Left lung (tissue), 14 donors: ENCODE measurements at regions of chr5 and their contacts with region 1.

Region 1: DNA sequence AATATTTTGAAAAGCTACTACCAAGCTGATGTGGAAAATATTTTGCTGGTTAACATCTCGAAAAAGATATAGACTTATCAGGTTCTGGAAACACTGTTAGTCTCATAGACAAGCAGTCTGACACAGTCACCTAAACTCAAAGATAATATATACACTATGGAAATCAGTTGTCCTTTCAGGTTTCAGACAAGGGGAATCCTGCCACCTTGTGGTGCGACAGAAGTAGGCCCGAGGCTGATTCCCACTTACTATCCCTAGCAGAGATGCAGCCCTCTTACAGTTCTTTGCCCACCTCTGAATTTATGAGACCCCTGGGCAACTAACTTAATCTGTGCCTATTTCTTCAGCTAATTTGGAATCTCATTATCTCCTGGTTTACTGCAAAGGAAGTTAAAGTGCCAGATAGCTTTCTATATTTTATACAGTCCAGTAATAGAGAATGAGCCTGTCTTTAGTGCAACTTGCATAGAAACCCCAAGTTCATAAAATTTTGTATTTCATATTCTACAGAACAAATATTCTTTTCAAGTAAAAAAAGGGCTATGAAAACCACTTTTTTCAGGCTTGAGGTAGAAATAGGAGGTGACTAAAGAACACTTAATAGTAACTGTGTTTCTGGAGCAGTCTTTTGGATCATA is 16.9 kb downstream of the RAD1 start:
- DNase-seq: peak in 3 of 4 donors; percentile 46 to 84 (median 61)
- ATAC-seq: peak; percentile 98
- H3K4me3 ChIP-seq: no peak overlapping the region
- H3K27ac ChIP-seq: no peak overlapping the region
- H3K4me1 ChIP-seq: no peaks in the 10 kb centered on the region
- H3K27me3 ChIP-seq: no peaks in the 10 kb centered on the region
- CTCF ChIP-seq: peak; percentile 80 to 88

Region 2: GRCh38 chr5:34483442-34484033 is 414.8 kb before region 1 on chr5:
- intact Hi-C with region 1: loop called in 1 of 2 experiments (anchors 5 kb)
- DNase-seq: no peak
- ATAC-seq: no peak
- H3K4me3 ChIP-seq: no peak overlapping the region
- H3K27ac ChIP-seq: no peak overlapping the region
- H3K4me1 ChIP-seq: peaks cover 14 to 18% of the 10 kb centered on the region in 2 donors
- H3K27me3 ChIP-seq: no peaks in the 10 kb centered on the region
- CTCF ChIP-seq: no peak

Region 3: GRCh38 chr5:34522599-34523386 is 375.6 kb before region 1 on chr5:
- intact Hi-C with region 1: loop called in 1 of 2 experiments (anchors 10 kb)
- DNase-seq: peak in 3 of 4 donors; percentile 65 to 82 (median 68)
- ATAC-seq: peak; percentile 92
- H3K4me3 ChIP-seq: no peak overlapping the region
- H3K27ac ChIP-seq: peak overlapping the region in 1 of 2 donors; percentile 29
- H3K4me1 ChIP-seq: peaks cover 0 to 21% of the 10 kb centered on the region in 2 donors
- H3K27me3 ChIP-seq: no peaks in the 10 kb centered on the region
- CTCF ChIP-seq: peak; percentile 74 to 75

Region 4: DNA sequence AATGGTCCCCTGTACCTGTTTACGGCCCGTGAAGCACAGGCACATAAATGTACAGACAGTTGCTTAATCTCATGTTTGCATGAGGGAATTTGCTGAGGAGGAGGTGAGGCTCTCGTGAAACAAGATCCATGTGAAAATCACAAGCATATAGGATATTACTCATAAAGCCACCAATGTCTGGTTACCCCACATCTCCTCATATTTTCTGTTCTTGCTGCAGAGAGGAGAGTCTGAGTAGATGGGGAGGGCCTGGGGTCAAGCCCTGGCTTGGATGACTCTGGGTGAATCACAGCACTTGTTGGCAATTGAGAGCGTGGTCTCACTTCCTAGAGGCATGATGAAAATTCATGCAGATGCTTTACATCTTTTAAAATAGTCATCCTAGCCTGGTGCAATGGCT is 148.4 kb after region 1 on chr5:
- intact Hi-C with region 1: no loop called
- DNase-seq: no peak
- ATAC-seq: peak; percentile 44
- H3K4me3 ChIP-seq: no peak overlapping the region
- H3K27ac ChIP-seq: no peak overlapping the region
- H3K4me1 ChIP-seq: no peaks in the 10 kb centered on the region
- H3K27me3 ChIP-seq: no peaks in the 10 kb centered on the region
- CTCF ChIP-seq: no peak

Region 5: GRCh38 chr5:35902046-35902676 is 1003.8 kb after region 1 on chr5:
- intact Hi-C with region 1: no loop called
- DNase-seq: no peak
- ATAC-seq: no peak
- H3K4me3 ChIP-seq: no peak overlapping the region
- H3K27ac ChIP-seq: no peak overlapping the region
- H3K4me1 ChIP-seq: no peaks in the 10 kb centered on the region
- H3K27me3 ChIP-seq: no peaks in the 10 kb centered on the region
- CTCF ChIP-seq: no peak